Stomach (tissue), 19 donors: ENCODE measurements at regions of chr17 and their contacts with region 1.

Region 1: GRCh38 chr17:82551779-82552457 is 32.4 kb downstream of the FOXK2 start:
- DNase-seq: peak; percentile 81 to 89
- H3K4me3 ChIP-seq: no peak overlapping the region
- H3K27ac ChIP-seq: peak overlapping the region; percentile 5 to 85 (median 18)
- H3K4me1 ChIP-seq: peaks cover 39 to 80% (median 66%) of the 10 kb centered on the region in 4 donors
- H3K27me3 ChIP-seq: no peaks in the 10 kb centered on the region
- CTCF ChIP-seq: peak in 5 of 7 experiments; percentile 67 to 84 (median 77)
- EP300 ChIP-seq: no peak
- POLR2A ChIP-seq: no peak

Region 2: GRCh38 chr17:82494236-82495055 is 57.5 kb before region 1 on chr17:
- intact Hi-C with region 1: loop called (anchors 10 kb)
- DNase-seq: peak; percentile 88 to 95
- H3K4me3 ChIP-seq: no peak overlapping the region
- H3K27ac ChIP-seq: peak overlapping the region; percentile 42 to 91 (median 74)
- H3K4me1 ChIP-seq: peaks cover 11 to 63% (median 43%) of the 10 kb centered on the region in 4 donors
- H3K27me3 ChIP-seq: no peaks in the 10 kb centered on the region
- CTCF ChIP-seq: peak in 6 of 7 experiments; percentile 15 to 98 (median 82)
- EP300 ChIP-seq: no peak
- POLR2A ChIP-seq: no peak

Region 3: GRCh38 chr17:82603981-82604448 is 52.1 kb after region 1 on chr17:
- intact Hi-C with region 1: no loop called
- DNase-seq: peak; percentile 50 to 80
- H3K4me3 ChIP-seq: no peak overlapping the region
- H3K27ac ChIP-seq: peak overlapping the region in 4 of 5 donors; percentile 21 to 60 (median 54)
- H3K4me1 ChIP-seq: peaks cover 0 to 25% (median 2%) of the 10 kb centered on the region in 4 donors
- H3K27me3 ChIP-seq: no peaks in the 10 kb centered on the region
- CTCF ChIP-seq: no peak
- EP300 ChIP-seq: no peak
- POLR2A ChIP-seq: no peak